ENCODE measurements at regions of chr3 and their contacts with region 1.

Region 1: GRCh38 chr3:59575113-59576001 is 525.5 kb upstream of the CFAP20DC start:
- DNase-seq: peak; percentile 92
- H3K4me3 Mint-ChIP-seq: no peak overlapping the region
- H3K27ac Mint-ChIP-seq: no peak overlapping the region
- H3K4me1 Mint-ChIP-seq: peaks cover 6% of the 10 kb centered on the region
- H3K27me3 Mint-ChIP-seq: no peaks in the 10 kb centered on the region

Region 2: DNA sequence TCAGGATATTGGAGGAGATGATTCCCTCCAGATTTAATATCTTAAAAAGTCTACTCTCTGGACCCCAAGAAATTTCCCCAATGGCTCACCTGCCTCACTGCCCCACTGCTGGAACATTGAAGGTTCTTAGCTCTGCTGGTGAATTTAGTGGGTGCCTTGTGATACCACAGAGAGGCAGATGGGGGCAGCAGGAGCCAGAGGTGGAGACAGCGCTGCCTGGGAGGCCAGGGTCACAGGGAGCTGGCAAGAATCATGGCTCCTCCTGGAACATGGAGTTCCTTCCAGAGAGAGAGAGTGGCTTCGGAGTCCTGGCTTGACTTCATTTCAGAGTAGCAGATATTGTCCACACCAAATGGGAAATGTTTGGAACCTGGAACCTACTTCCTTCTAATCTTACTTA is 262.0 kb before region 1 on chr3:
- CTCF ChIA-PET with region 1: interaction called, 24 read pairs
- DNase-seq: peak; percentile 58
- H3K4me3 Mint-ChIP-seq: no peak overlapping the region
- H3K27ac Mint-ChIP-seq: no peak overlapping the region
- H3K4me1 Mint-ChIP-seq: peaks cover 2% of the 10 kb centered on the region
- H3K27me3 Mint-ChIP-seq: peaks cover 5% of the 10 kb centered on the region

Region 3: DNA sequence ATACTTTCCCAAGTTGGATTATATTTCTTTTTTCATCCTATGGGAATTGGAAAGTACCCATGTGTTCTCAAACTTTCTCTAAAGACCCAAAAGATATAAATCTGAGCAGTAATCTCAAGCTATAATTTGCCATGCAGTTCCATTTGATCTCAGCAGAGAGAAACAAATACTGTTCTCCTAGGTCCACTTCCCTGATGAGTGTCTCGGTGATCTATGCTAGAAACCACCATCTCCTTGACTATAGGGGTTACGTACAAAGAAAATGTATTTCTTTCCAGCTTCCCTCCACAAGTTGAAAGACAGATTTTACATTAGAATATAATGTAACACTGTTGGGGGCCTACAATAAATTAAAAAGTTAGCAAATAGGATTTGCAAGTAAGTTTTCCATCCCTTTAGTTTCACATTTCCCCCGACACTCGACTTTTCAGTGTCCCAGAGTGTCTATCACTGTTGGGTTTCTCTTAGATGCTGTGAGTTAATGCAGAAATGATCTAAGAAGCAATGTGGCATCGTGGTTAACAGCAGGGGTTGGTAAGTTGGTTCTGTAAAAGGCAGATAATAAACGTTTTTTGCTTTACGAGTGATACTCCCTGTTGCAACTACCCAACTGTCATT is 60.4 kb before region 1 on chr3:
- CTCF ChIA-PET with region 1: no interaction called
- DNase-seq: no peak
- H3K4me3 Mint-ChIP-seq: no peak overlapping the region
- H3K27ac Mint-ChIP-seq: no peak overlapping the region
- H3K4me1 Mint-ChIP-seq: no peaks in the 10 kb centered on the region
- H3K27me3 Mint-ChIP-seq: peaks cover 5% of the 10 kb centered on the region

Region 4: GRCh38 chr3:59545374-59545773 is 30.0 kb before region 1 on chr3:
- CTCF ChIA-PET with region 1: no interaction called
- DNase-seq: no peak
- H3K4me3 Mint-ChIP-seq: no peak overlapping the region
- H3K27ac Mint-ChIP-seq: no peak overlapping the region
- H3K4me1 Mint-ChIP-seq: peaks cover 7% of the 10 kb centered on the region
- H3K27me3 Mint-ChIP-seq: no peaks in the 10 kb centered on the region

Region 5: GRCh38 chr3:59563072-59563605 is 12.2 kb before region 1 on chr3:
- CTCF ChIA-PET with region 1: no interaction called
- DNase-seq: no peak
- H3K4me3 Mint-ChIP-seq: no peak overlapping the region
- H3K27ac Mint-ChIP-seq: no peak overlapping the region
- H3K4me1 Mint-ChIP-seq: peaks cover 14% of the 10 kb centered on the region
- H3K27me3 Mint-ChIP-seq: no peaks in the 10 kb centered on the region

Region 6: GRCh38 chr3:59809710-59810444 is 234.5 kb after region 1 on chr3:
- CTCF ChIA-PET with region 1: interaction called, 27 read pairs
- DNase-seq: no peak
- H3K4me3 Mint-ChIP-seq: no peak overlapping the region
- H3K27ac Mint-ChIP-seq: no peak overlapping the region
- H3K4me1 Mint-ChIP-seq: no peaks in the 10 kb centered on the region
- H3K27me3 Mint-ChIP-seq: no peaks in the 10 kb centered on the region

Region 7: DNA sequence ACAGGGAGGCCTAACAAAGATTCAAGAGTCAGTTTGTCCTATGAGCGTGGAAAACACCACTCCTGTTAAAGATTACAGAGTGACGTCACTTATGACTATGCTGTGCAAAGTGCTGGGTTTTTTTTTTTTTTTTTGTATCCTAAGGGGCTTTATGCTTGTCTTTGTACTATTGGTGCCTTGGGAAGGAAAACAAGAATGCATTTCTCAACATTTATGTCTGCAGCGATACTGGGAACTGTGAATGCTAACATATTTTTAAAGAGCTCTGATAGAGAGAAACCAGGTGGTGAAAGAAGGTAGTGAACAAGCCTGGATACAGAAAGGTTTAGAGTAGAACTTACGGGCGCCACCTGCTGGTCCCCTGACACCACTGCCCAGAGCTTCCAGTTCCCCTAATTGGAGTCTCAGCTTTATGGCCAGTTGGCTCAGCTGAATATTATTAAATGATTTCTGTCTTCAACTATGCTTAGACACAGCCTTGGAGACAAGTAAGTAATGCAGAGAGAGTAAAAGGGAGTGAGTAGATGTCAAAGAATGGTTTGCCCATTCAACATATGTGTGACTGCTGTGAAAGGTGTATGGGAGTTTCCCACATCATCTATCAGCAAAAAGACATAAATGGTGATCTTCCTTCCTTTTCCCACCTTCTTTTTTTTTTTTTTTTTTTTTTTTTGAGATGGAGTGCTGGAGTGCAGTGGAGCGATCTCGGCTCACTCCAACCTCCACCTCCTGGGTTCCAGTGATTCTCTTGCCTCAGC is 282.4 kb after region 1 on chr3:
- CTCF ChIA-PET with region 1: interaction called, 49 read pairs
- DNase-seq: peak; percentile 86
- H3K4me3 Mint-ChIP-seq: no peak overlapping the region
- H3K27ac Mint-ChIP-seq: no peak overlapping the region
- H3K4me1 Mint-ChIP-seq: peaks cover 8% of the 10 kb centered on the region
- H3K27me3 Mint-ChIP-seq: no peaks in the 10 kb centered on the region

Region 8: DNA sequence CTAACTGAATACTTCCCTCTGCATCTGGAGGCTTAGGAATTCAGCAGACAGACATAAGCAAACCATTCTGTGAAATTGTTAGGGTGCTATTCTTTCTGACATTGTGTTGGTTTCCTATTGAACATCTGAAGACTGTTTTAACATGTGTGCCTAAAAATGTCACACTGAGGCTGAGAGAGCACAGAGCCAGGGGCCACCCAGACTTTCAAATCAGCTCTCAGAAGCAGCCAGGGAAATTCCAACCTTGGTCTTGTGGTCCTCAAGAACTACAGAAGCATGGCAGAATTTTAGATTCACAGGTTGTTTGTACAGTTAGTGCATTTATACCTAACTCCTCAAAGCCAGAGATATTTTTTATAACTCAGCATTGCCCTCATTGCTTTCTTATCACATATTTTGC is 403.6 kb after region 1 on chr3:
- CTCF ChIA-PET with region 1: no interaction called
- DNase-seq: no peak
- H3K4me3 Mint-ChIP-seq: no peak overlapping the region
- H3K27ac Mint-ChIP-seq: no peak overlapping the region
- H3K4me1 Mint-ChIP-seq: peaks cover 41% of the 10 kb centered on the region
- H3K27me3 Mint-ChIP-seq: no peaks in the 10 kb centered on the region